Panc1 (cell line): ENCODE measurements at regions of chr12 and their contacts with region 1.

Region 1: GRCh38 chr12:59403259-59403932 is 192.4 kb upstream of the SLC16A7 start:
- DNase-seq: peak; percentile 52
- ATAC-seq: peak; percentile 83; the same call in 1 of the 2 replicates
- H3K4me3 ChIP-seq: no peak overlapping the region
- H3K27ac ChIP-seq: no peak overlapping the region; the same call in 1 of the 2 replicates
- H3K4me1 ChIP-seq: no peaks in the 10 kb centered on the region
- H3K27me3 ChIP-seq: no peaks in the 10 kb centered on the region
- CTCF ChIP-seq: peak; percentile 84

Region 2: GRCh38 chr12:59808317-59808910 is 405.0 kb after region 1 on chr12:
- CTCF ChIA-PET with region 1: no interaction called
- POLR2A ChIA-PET with region 1: no interaction called
- in situ Hi-C with region 1: no loop called
- intact Hi-C with region 1: loop called (anchors 2 kb)
- DNase-seq: peak; percentile 18
- ATAC-seq: peak; percentile 77; the same call in 1 of the 2 replicates
- H3K4me3 ChIP-seq: no peak overlapping the region
- H3K27ac ChIP-seq: no peak overlapping the region
- H3K4me1 ChIP-seq: no peaks in the 10 kb centered on the region
- H3K27me3 ChIP-seq: no peaks in the 10 kb centered on the region
- CTCF ChIP-seq: peak; percentile 68; the same call in 1 of the 2 replicates

Region 3: GRCh38 chr12:60494244-60494643 is 1090.8 kb after region 1 on chr12:
- CTCF ChIA-PET with region 1: no interaction called
- POLR2A ChIA-PET with region 1: no interaction called
- in situ Hi-C with region 1: no loop called
- intact Hi-C with region 1: loop called (anchors 10 kb)
- DNase-seq: no peak
- ATAC-seq: no peak
- H3K4me3 ChIP-seq: no peak overlapping the region
- H3K27ac ChIP-seq: no peak overlapping the region
- H3K4me1 ChIP-seq: no peaks in the 10 kb centered on the region
- H3K27me3 ChIP-seq: no peaks in the 10 kb centered on the region
- CTCF ChIP-seq: peak; percentile 69